RWPE1 (cell line): ENCODE measurements at regions of chr3 and their contacts with region 1.

Region 1: GRCh38 chr3:111761309-111761831 is 97.7 kb upstream of the PHLDB2 start:
- DNase-seq: peak; percentile 86
- H3K27ac ChIP-seq: peak overlapping the region; percentile 96
- CTCF ChIP-seq: no peak

Region 2: DNA sequence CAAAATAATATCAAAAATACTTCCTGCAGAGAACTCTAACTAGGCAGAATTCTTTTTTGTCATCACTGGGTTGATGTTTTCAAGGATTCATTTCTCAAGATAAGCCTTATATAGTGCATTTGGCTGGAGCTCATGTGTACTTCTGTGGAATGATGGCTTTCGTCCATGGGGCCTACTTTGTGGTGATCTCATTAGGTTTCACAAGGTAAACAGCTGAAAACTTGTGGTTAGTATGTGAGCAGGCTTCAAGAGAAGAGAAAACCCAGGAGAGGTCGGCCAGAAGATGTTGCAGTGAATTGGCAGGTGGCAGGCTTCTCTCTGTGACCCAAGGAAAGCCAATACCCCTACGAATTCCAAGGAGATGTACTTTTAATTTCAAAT is 23.7 kb before region 1 on chr3:
- CTCF ChIA-PET with region 1: no interaction called
- POLR2A ChIA-PET with region 1: no interaction called
- DNase-seq: no peak
- H3K27ac ChIP-seq: no peak overlapping the region
- CTCF ChIP-seq: no peak

Region 3: GRCh38 chr3:111919370-111920065 is 158.1 kb after region 1 on chr3:
- CTCF ChIA-PET with region 1: interaction called, 11 read pairs
- POLR2A ChIA-PET with region 1: no interaction called
- DNase-seq: no peak
- H3K27ac ChIP-seq: no peak overlapping the region
- CTCF ChIP-seq: no peak